Activated B cell treated with CpG ODN at 0.5 μM for 24 hours (primary cell): ENCODE measurements at regions of chr10 and their contacts with region 1.

Region 1: DNA sequence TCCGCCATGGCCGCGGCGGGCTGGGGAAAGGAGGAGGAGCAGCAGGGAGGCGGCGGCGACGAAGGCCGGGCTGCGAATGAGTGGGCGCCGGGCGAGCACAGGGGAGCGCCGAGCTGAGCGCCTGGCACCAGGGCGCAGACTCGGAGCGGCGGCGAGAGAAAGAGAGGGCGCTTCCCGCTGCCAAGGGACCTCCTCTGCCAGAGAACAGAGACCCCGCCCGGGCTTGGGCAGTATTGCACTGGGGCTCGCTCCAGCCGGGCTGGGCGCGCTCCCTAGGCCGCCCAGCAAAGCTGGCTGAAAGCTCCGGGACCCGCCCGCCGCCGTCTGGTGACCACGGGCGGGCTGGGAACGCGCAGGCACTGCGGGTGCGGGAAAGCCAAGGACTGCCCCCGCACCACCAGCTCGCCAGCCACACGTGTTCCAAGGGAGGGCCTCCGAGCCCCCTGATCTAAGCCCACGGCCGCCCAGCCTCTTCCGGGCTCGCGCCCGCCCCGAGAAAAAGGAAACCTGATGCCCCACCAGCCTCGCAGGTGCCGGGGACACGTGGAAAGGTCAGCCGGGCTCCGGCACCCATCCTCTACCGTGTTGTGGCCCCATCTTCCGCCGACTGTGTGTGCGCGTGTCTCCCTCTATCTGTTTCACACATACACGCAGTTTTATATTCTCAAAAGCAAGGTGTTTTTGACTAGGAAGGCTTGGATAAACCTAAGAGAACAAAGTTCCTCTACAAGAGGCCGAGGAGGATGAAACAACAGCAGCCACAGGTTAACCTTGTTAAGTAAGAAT is at the start of gene CCDC6:
- DNase-seq: peak; percentile 91
- ATAC-seq: peak; percentile 81
- H3K4me3 Mint-ChIP-seq: peak within 1 kb of the TSS; percentile 95
- H3K27ac Mint-ChIP-seq: peak within 1 kb of the TSS; percentile 95
- H3K4me1 Mint-ChIP-seq: peaks cover 59% of the 10 kb centered on the region
- H3K27me3 Mint-ChIP-seq: no peaks in the 10 kb centered on the region
- CTCF ChIP-seq: no peak
- total RNA-seq, gene CCDC6: 27.9 and 32.2 TPM in 2 replicates

Region 2: GRCh38 chr10:58384999-58385783 is 1521.4 kb before region 1 on chr10 and contains the start of gene TFAM:
- CTCF ChIA-PET with region 1: no interaction called
- POLR2A ChIA-PET with region 1: interaction called, 4 read pairs
- intact Hi-C with region 1: loop called (anchors 5 kb)
- DNase-seq: peak; percentile 97
- ATAC-seq: peak; percentile 84
- H3K4me3 Mint-ChIP-seq: peak within 1 kb of the TSS; percentile 98
- H3K27ac Mint-ChIP-seq: peak within 1 kb of the TSS; percentile 97
- H3K4me1 Mint-ChIP-seq: peaks cover 41% of the 10 kb centered on the region
- H3K27me3 Mint-ChIP-seq: no peaks in the 10 kb centered on the region
- CTCF ChIP-seq: no peak
- total RNA-seq, gene TFAM: 59.5 and 60.2 TPM in 2 replicates

Region 3: GRCh38 chr10:59808896-59809643 is 97.5 kb before region 1 on chr10:
- CTCF ChIA-PET with region 1: interaction called, 6 read pairs
- POLR2A ChIA-PET with region 1: no interaction called
- intact Hi-C with region 1: loop called (anchors 1 kb)
- DNase-seq: peak; percentile 41
- ATAC-seq: peak; percentile 92
- H3K4me3 Mint-ChIP-seq: no peak overlapping the region
- H3K27ac Mint-ChIP-seq: no peak overlapping the region
- H3K4me1 Mint-ChIP-seq: peaks cover 17% of the 10 kb centered on the region
- H3K27me3 Mint-ChIP-seq: no peaks in the 10 kb centered on the region
- CTCF ChIP-seq: no peak

Region 4: DNA sequence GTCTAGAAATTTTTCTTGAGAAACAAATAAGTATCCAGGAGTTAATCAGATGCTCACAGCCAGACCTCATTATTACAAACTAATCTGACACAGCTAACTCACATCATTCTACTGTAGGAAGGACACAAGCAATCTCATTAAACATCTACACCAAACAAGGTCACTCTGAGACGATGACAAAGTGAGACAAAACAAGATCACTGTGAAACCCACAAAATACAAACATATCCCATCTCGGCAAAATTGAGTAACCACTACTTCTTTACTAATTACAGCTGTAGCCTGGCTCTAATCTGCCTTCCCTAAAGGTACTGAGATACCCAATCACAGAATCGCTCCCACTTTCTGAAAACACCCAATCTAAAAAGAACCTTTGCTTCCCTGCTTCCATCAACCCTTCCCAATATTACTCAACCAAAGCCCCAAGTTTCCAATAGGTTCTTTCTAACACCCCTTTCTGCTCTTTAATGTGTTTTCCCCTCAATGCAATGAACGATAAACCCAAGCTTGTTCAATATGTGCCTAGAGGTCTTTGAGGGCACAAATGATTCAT is 27.2 kb before region 1 on chr10:
- CTCF ChIA-PET with region 1: interaction called, 8 read pairs
- POLR2A ChIA-PET with region 1: interaction called, 69 read pairs
- intact Hi-C with region 1: no loop called
- DNase-seq: no peak
- ATAC-seq: no peak
- H3K4me3 Mint-ChIP-seq: peak overlapping the region; percentile 1
- H3K27ac Mint-ChIP-seq: peak overlapping the region; percentile 57
- H3K4me1 Mint-ChIP-seq: peaks cover 89% of the 10 kb centered on the region
- H3K27me3 Mint-ChIP-seq: no peaks in the 10 kb centered on the region
- CTCF ChIP-seq: no peak

Region 5: GRCh38 chr10:60032723-60033122 is 126.1 kb after region 1 on chr10:
- CTCF ChIA-PET with region 1: no interaction called
- POLR2A ChIA-PET with region 1: no interaction called
- intact Hi-C with region 1: loop called (anchors 1 kb)
- DNase-seq: no peak
- ATAC-seq: no peak
- H3K4me3 Mint-ChIP-seq: no peak overlapping the region
- H3K27ac Mint-ChIP-seq: no peak overlapping the region
- H3K4me1 Mint-ChIP-seq: peaks cover 14% of the 10 kb centered on the region
- H3K27me3 Mint-ChIP-seq: no peaks in the 10 kb centered on the region
- CTCF ChIP-seq: no peak

Region 6: GRCh38 chr10:60186315-60187071 is 279.9 kb after region 1 on chr10:
- CTCF ChIA-PET with region 1: no interaction called
- POLR2A ChIA-PET with region 1: no interaction called
- intact Hi-C with region 1: no loop called
- DNase-seq: no peak
- ATAC-seq: no peak
- H3K4me3 Mint-ChIP-seq: no peak overlapping the region
- H3K27ac Mint-ChIP-seq: no peak overlapping the region
- H3K4me1 Mint-ChIP-seq: no peaks in the 10 kb centered on the region
- H3K27me3 Mint-ChIP-seq: peaks cover 3% of the 10 kb centered on the region
- CTCF ChIP-seq: no peak

Region 7: DNA sequence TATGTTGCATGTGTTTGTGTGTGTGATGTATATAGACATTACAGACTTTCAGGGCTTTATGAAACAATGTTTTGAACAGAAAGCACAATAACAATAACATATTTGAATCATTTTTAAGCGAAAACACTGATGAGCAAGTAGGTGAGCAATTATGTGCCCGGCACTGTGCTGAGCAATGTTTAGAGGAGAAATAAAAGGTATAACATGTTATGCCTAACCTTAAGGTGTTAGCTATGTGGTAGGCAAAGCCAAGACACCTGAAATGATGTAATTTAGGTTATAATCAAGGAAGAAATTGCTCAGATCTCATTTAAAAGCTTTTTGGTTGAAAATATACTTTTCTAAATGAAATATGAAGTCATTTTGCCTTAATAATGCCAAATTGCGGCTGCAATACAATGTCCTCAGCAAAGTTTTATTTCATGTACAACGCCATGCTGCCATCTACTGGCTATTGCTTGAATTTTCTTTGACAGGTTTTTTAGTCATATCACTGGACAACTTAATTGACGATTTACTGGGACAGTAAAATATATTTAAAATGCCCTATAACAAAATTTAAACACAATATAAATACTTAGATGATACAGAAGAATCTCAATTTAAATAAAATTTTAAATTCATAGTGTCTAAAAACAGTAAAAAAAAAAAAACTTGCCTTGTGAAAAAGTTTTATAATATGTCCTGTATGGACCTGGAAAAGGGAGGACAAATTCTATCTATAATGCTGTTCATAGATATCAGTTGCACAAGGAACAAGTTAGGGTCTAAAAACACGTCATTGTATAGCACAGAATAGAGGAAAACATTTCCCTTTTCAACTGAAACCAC is 740.6 kb after region 1 on chr10:
- CTCF ChIA-PET with region 1: interaction called, 4 read pairs
- POLR2A ChIA-PET with region 1: no interaction called
- intact Hi-C with region 1: loop called (anchors 10 kb)
- DNase-seq: no peak
- ATAC-seq: peak; percentile 42
- H3K4me3 Mint-ChIP-seq: no peak overlapping the region
- H3K27ac Mint-ChIP-seq: no peak overlapping the region
- H3K4me1 Mint-ChIP-seq: peaks cover 1% of the 10 kb centered on the region
- H3K27me3 Mint-ChIP-seq: no peaks in the 10 kb centered on the region
- CTCF ChIP-seq: peak; percentile 79